ENCODE measurements at regions of chr3 and their contacts with region 1.

Region 1: DNA sequence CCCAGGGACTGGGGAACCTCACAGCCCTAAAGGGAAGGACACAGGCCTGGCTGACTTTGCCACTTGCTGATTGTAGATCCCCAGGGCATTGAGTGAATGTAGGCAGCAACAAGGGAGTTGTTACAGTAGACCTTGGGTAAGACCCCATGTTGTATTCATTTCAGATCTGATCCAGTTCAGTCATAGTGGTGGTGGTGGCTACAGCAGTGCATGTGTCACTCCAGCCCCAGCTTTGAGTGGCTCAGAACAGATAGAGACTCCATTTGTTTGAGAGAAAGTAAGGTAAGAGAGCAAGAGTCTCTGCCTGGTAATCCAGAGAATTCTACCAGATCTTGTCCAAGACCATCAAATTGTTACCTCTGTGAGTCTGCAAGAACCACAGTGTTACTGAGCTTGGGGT is 278.7 kb upstream of the SATB1 start:
- DNase-seq: no peak
- ATAC-seq: no peak
- H3K4me3 ChIP-seq: no peak overlapping the region
- H3K27ac ChIP-seq: no peak overlapping the region
- H3K4me1 ChIP-seq: no peaks in the 10 kb centered on the region
- H3K27me3 ChIP-seq: no peaks in the 10 kb centered on the region
- CTCF ChIP-seq: peak in 1 of 3 experiments; percentile 6; a peak in 1 of 6 replicates
- EP300 ChIP-seq: no peak
- POLR2A ChIP-seq: no peak
- RAD21 ChIP-seq: 0 out of 2 replicates have a peak, but pooled peaks have one; percentile 27

Region 2: GRCh38 chr3:18716821-18717220 is 13.0 kb after region 1 on chr3:
- CTCF ChIA-PET with region 1: interaction called, 3 read pairs
- POLR2A ChIA-PET with region 1: no interaction called
- RAD21 ChIA-PET with region 1: no interaction called
- SMC1A ChIA-PET with region 1: interaction called, 19 read pairs
- in situ Hi-C with region 1: no loop called
- intact Hi-C with region 1: no loop called
- DNase-seq: no peak
- ATAC-seq: no peak
- H3K4me3 ChIP-seq: no peak overlapping the region
- H3K27ac ChIP-seq: no peak overlapping the region
- H3K4me1 ChIP-seq: no peaks in the 10 kb centered on the region
- H3K27me3 ChIP-seq: no peaks in the 10 kb centered on the region
- CTCF ChIP-seq: no peak
- EP300 ChIP-seq: no peak
- POLR2A ChIP-seq: no peak
- RAD21 ChIP-seq: no peak

Measured in GM12878 (cell line).